GM13977 (cell line): ENCODE measurements at regions of chr1 and their contacts with region 1.

Region 1: GRCh38 chr1:110780600-110781484 is 92.1 kb upstream of the CD53 start:
- DNase-seq: peak; percentile 62
- CTCF ChIP-seq: peak; percentile 82

Region 2: DNA sequence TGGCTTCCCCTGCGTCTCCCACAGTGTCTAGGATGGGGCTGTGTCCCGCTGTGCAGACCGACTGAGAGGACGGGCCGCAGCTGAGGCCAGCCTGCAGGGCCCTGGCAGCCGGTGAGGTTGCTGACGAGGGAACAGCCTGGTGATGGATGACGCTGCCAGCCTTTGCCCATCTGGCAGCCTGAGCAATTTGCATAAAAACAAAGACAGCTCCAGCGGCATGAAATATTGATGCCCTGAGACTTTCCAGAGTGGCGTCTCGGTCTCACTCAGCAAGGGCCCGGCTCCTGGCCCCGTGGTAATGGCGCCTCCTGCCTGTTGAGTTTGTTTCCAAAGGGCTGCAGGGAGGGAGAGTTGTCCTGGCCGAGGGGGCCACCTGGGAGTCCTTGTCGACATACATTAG is 242.8 kb before region 1 on chr1:
- in situ Hi-C with region 1: loop called (anchors 10 kb)
- DNase-seq: no peak
- CTCF ChIP-seq: no peak

Region 3: DNA sequence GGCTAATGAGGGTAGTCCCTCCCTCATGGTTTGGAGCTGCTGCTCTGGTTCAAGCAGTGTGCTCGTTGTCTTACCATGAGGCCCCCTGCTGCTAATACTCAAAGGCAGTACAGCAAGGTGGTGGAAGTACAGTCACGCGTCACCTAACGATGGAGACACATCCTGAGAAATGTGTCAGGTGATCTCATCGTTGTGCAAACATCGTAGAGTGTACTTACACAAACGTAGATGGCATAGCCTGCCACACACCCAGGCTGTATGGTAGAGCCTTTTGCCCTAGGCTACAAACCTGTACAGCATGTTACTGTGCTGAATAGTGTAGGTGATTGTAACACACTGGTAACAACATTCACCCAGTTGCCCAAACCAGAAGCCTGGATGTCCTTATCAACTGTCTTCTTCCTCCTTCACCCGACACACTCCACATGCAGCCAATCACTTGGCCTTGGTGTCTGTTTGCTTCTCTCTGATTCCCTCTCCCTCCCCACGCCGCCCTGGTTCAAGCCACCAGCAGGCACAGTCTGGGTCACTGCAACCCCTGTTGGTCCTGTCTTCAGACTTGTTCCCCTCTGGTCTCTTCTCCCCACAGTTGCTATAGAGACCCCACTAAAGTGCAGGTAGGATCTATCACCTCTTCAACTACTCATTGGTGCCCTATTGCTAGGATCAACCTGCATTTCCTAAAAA is 168.6 kb before region 1 on chr1:
- in situ Hi-C with region 1: loop called (anchors 5 kb)
- DNase-seq: no peak
- CTCF ChIP-seq: no peak

Region 4: GRCh38 chr1:110645821-110646735 is 134.8 kb before region 1 on chr1:
- in situ Hi-C with region 1: no loop called
- DNase-seq: no peak
- CTCF ChIP-seq: no peak

Region 5: DNA sequence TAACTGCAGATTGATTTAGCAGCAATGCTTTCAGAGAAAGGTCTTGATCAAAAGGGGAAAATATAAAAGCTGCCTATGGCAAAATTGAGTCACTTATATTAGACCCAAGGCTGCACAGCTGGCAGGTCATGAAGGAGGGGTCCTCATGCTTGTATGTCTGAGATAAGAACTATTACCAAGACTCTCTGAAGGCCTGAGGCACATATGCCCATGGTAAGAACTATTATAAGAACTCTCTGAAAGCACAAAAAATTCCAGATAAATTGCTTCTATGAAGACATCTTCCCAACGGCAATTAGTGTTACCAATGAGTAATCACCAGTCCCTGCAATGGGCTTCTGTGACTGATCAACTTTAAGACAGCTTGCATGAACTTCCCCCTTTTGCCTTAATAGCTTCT is 225.7 kb after region 1 on chr1:
- in situ Hi-C with region 1: loop called (anchors 10 kb)
- DNase-seq: no peak
- CTCF ChIP-seq: no peak

Region 6: GRCh38 chr1:111354584-111354983 is 573.7 kb after region 1 on chr1:
- in situ Hi-C with region 1: no loop called
- DNase-seq: no peak
- CTCF ChIP-seq: no peak